B cell (primary cell): ENCODE measurements at regions of chr1 and their contacts with region 1.

Region 1: GRCh38 chr1:147541672-147542568 is 619 bp downstream of the BCL9 start:
- DNase-seq: peak; percentile 19
- ATAC-seq: no peak
- H3K4me3 ChIP-seq: peak overlapping the region; percentile 6 to 44 (median 32)
- H3K4me3 Mint-ChIP-seq: peak overlapping the region; percentile 35
- H3K27ac ChIP-seq: no peak overlapping the region
- H3K27ac Mint-ChIP-seq: no peak overlapping the region
- H3K4me1 ChIP-seq: peaks cover 25 to 27% of the 10 kb centered on the region in 2 donors
- H3K4me1 Mint-ChIP-seq: peaks cover 11% of the 10 kb centered on the region
- H3K27me3 ChIP-seq: peaks cover 0 to 22% (median 10%) of the 10 kb centered on the region in 4 experiments
- H3K27me3 Mint-ChIP-seq: peaks cover 47% of the 10 kb centered on the region
- CTCF ChIP-seq: no peak

Region 2: DNA sequence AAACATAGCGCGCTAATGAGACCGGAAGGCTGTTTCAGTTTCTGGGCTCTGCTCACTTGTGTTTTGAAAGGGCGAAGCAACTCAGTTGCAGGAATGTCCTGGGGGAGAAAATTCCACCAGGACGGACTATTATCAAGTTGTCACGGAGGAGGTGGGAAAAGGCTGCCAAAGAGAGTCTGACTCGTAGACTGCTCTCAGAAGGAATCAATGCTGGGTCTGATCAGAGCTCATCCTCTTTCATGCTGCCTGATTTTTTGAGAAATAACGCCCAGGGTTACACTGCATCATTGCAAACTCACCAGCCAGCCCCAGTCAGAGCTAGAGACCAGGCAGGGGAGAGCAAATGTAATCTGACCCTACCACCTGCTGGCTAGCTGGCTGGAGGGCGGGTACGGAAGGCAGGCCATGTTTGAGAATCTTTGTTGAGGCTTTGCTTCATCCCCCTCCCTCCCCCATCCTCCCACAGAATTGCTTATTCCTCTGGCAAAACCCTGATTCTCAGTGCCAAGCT is 37.1 kb before region 1 on chr1:
- CTCF ChIA-PET with region 1: no interaction called
- POLR2A ChIA-PET with region 1: no interaction called
- intact Hi-C with region 1: no loop called
- DNase-seq: no peak
- ATAC-seq: no peak
- H3K4me3 ChIP-seq: no peak overlapping the region
- H3K4me3 Mint-ChIP-seq: no peak overlapping the region
- H3K27ac ChIP-seq: no peak overlapping the region
- H3K27ac Mint-ChIP-seq: no peak overlapping the region
- H3K4me1 ChIP-seq: no peaks in the 10 kb centered on the region
- H3K4me1 Mint-ChIP-seq: no peaks in the 10 kb centered on the region
- H3K27me3 ChIP-seq: peaks cover 0 to 9% (median 4%) of the 10 kb centered on the region in 4 experiments
- H3K27me3 Mint-ChIP-seq: peaks cover 11% of the 10 kb centered on the region
- CTCF ChIP-seq: no peak

Region 3: DNA sequence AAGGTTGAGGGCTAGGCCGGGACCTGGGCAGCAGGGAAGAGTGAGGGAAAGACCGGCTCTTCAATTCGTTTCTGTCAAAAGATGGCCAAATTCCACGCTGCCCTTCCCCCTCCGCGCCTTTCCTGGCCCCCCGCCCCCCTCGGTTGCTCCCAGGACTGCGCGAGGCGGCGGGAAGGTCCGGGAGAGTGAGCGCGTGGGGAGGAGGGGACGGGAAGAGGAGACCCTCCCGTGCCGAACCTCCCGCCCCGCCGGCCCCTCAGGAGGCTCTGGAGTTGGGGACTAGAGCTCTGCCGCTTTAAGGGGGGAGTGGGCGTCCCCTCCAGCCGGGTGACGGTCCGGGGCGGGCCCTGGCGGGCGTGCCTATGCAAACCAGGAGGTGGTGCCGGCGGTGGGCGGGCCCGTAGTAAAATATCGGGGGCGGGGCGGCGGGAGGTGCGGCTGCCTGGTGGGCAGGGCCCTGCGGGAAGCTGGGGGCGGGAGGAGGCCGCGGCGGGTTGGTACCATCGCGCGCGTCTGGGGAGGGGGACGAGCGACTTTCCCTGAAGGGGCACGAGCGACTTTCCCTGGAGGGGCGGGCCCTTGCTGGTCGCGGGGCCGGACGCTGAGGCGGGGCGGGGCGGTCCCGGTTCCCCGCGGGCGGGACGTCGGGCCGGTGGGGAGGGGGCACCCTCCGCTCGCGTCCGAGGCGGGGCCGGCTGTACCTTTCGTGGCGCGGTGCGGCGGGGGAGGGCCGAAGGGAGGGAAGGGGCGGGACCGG is 57.6 kb after region 1 on chr1:
- CTCF ChIA-PET with region 1: interaction called, 3 read pairs
- POLR2A ChIA-PET with region 1: interaction called, 6 read pairs
- intact Hi-C with region 1: loop called (anchors 1 kb)
- DNase-seq: peak; percentile 96
- ATAC-seq: peak; percentile 84
- H3K4me3 ChIP-seq: peak overlapping the region; percentile 47 to 83 (median 74)
- H3K4me3 Mint-ChIP-seq: peak overlapping the region; percentile 94
- H3K27ac ChIP-seq: peak overlapping the region; percentile 28 to 62
- H3K27ac Mint-ChIP-seq: peak overlapping the region; percentile 71
- H3K4me1 ChIP-seq: peaks cover 15 to 18% of the 10 kb centered on the region in 2 donors
- H3K4me1 Mint-ChIP-seq: peaks cover 15% of the 10 kb centered on the region
- H3K27me3 ChIP-seq: peaks cover 0 to 13% (median 8%) of the 10 kb centered on the region in 4 experiments
- H3K27me3 Mint-ChIP-seq: no peaks in the 10 kb centered on the region
- CTCF ChIP-seq: no peak